Common myeloid progenitor, CD34-positive (primary cell): ENCODE measurements at regions of chr22 and their contacts with region 1.

Region 1: GRCh38 chr22:40024201-40025061 is 29.7 kb downstream of the FAM83F start:
- DNase-seq: peak; percentile 35 to 48 (median 42)
- H3K4me3 ChIP-seq: no peak overlapping the region
- H3K27ac ChIP-seq: no peak overlapping the region
- H3K4me1 ChIP-seq: peaks cover 0 to 4% (median 4%) of the 10 kb centered on the region in 4 experiments
- H3K27me3 ChIP-seq: peaks cover 0 to 14% (median 4%) of the 10 kb centered on the region in 5 experiments

Region 2: DNA sequence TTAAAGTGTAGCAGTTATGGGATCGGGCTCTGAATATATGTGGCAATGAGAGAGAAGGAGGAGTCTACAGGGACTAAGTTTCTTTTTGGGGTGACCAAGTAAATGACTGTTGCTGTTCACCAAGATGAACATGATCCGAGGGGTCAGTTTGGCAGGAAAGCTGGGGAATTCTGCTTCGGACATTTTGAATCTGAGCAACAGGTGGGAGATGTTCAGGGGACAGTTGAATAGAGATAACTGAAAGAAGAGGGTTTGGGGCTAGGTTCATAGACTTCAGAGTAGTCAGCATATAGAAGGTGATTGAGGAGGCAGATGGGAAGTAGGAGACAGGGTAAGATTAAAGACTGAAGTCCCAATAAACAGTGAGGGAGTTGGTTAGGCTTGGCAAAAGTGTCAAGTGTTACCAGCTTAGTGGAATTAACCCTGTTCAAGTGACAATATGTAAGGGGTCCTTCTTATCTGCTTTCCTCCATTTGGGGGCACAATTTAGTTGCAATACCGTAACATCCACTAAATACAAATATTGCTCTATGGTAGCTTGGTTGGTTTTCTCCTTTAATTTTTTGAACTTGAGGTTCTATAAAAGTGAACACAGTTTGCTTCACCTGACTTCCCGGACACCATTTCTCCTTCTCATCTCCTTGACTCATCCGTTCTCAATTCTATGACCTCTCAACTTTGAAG is 128.0 kb before region 1 on chr22:
- CTCF ChIA-PET with region 1: interaction called, 10 read pairs
- POLR2A ChIA-PET with region 1: no interaction called
- DNase-seq: no peak
- H3K4me3 ChIP-seq: no peak overlapping the region
- H3K27ac ChIP-seq: no peak overlapping the region
- H3K4me1 ChIP-seq: peaks cover 13 to 40% (median 20%) of the 10 kb centered on the region in 4 experiments
- H3K27me3 ChIP-seq: no peaks in the 10 kb centered on the region

Region 3: DNA sequence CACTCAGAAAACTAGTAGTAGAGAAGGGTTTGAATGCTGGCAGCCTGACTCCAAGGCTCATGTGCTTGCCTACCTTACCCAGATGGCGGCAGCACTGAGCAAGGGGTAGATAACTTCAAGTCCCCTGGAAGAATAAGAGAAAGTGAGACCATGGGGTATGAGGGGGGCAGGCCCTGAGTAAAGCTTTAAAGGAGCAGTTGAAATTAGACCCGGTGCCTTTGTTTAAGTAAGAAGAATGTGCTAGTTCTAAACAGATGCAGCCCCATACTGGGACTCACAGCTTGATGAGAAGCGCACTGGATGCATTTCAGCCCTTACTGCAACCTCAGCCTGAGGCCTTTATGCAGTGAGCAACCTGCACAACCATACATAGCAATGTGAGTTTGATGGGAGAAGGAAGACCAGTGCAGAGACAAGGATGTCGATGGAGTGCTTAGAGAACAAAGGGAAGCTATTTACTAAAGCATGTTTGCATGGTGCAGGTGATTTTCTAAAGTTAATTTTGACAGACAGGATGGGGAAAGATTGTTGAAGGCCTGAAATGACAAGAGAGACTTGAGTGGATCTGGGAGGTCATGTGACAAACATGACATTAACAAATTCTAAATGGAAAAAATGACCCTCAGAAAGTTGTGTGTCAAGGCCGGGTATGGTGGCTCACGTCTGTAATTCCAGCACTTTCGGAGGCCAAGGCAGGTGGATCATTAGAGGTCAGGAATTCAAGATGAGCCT is 91.3 kb before region 1 on chr22:
- CTCF ChIA-PET with region 1: interaction called, 14 read pairs
- POLR2A ChIA-PET with region 1: no interaction called
- DNase-seq: peak; percentile 54 to 77 (median 73)
- H3K4me3 ChIP-seq: no peak overlapping the region
- H3K27ac ChIP-seq: no peak overlapping the region
- H3K4me1 ChIP-seq: peaks cover 0 to 22% (median 4%) of the 10 kb centered on the region in 4 experiments
- H3K27me3 ChIP-seq: peaks cover 0 to 39% (median 14%) of the 10 kb centered on the region in 5 experiments

Region 4: DNA sequence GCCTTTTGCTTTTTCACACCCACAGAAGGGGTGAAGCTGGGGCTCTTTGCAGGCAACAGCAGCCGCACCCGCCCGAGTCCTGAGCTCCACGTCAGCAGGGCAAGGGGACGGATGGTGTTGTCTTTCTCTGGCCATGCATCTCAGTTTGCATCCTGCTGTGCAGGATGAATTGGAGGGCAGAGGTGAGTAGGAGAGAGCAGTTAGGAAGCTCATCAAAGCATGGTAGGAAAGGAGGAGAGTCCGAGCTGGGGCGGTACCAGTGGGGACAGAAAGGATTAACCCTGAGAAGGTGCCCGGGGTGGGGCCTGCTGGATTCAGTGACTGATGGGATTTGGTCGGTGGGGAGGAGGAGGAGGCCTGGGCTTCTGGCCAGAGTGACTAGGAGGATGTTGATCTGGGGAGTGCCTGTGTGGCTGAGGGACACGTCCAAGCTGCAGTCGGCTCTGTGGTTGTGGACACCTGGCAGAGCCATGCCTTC is 15.1 kb before region 1 on chr22:
- CTCF ChIA-PET with region 1: interaction called, 19 read pairs
- POLR2A ChIA-PET with region 1: interaction called, 4 read pairs
- DNase-seq: no peak
- H3K4me3 ChIP-seq: no peak overlapping the region
- H3K27ac ChIP-seq: no peak overlapping the region
- H3K4me1 ChIP-seq: no peaks in the 10 kb centered on the region
- H3K27me3 ChIP-seq: peaks cover 0 to 67% (median 25%) of the 10 kb centered on the region in 5 experiments

Region 5: GRCh38 chr22:40036591-40037225 is 12.3 kb after region 1 on chr22:
- CTCF ChIA-PET with region 1: interaction called, 36 read pairs
- POLR2A ChIA-PET with region 1: no interaction called
- DNase-seq: peak; percentile 79 to 84 (median 80)
- H3K4me3 ChIP-seq: no peak overlapping the region
- H3K27ac ChIP-seq: no peak overlapping the region
- H3K4me1 ChIP-seq: peaks cover 6 to 40% (median 24%) of the 10 kb centered on the region in 4 experiments
- H3K27me3 ChIP-seq: no peaks in the 10 kb centered on the region

Region 6: DNA sequence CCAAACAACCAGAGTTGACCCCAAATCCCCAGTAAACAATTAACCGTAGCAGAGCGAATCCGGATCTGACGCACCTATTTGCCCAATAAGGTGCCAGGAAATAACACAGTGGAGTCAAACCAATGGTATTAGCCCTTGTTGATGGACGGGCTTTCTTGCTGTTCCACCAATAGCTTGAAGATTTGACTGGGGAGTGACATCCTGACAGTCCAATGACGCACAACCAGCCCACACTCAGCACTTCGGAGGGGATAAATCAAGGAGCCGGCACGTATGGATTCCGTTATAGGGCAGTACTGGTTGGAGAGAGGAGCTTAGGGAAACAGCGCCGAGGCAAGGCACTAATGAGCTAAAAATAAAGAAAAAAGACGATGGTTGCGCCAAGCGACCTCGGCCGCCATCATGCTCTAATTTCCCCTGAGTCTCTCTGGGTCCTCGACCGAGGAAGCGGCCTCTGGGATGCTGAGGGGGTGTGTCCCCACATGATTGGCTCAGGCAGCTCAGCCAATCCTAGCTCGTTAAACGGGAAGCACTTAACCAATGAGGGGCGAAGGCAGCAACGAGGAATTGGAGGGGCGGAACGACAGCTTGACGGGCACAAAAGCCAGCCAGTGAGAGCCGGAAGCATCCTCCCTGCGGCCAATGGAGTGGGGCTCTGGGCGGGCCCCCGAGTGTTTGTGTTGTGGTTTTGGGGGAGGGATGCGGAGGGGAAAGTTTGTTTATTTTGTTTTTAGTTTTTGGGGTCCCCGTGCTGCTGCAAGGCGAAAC is 19.9 kb after region 1 on chr22:
- CTCF ChIA-PET with region 1: interaction called, 24 read pairs
- POLR2A ChIA-PET with region 1: no interaction called
- DNase-seq: peak; percentile 100
- H3K4me3 ChIP-seq: peak overlapping the region; percentile 75 to 98 (median 85)
- H3K27ac ChIP-seq: peak overlapping the region; percentile 96 to 97
- H3K4me1 ChIP-seq: peaks cover 14 to 48% (median 39%) of the 10 kb centered on the region in 4 experiments
- H3K27me3 ChIP-seq: no peaks in the 10 kb centered on the region

Region 7: DNA sequence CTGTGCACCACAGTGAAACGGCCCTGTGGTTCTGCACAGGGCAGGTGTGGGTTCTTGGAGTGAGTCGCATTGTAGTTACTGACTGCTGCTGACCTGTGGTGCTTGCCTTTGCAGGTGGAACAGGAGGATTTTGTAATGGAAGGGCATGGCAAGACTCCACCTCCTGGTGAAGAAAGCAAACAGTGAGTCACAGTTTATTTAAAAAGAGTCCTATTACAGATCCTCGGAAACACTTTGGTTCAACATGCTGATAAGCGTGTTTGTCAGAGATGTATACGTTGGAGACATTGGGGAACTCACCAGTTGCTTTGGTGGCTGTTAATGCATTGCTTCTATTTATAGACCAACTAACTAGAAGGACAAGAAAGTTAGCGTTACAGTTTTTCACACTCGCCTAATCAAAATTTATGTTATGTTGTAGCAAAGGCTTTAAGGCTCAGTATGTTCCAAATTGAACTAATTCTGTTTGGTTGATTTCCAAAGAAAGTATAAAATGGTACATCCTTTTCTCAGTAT is 131.6 kb after region 1 on chr22:
- CTCF ChIA-PET with region 1: no interaction called
- POLR2A ChIA-PET with region 1: no interaction called
- DNase-seq: peak in 2 of 3 donors; percentile 26 to 45
- H3K4me3 ChIP-seq: no peak overlapping the region
- H3K27ac ChIP-seq: no peak overlapping the region
- H3K4me1 ChIP-seq: no peaks in the 10 kb centered on the region
- H3K27me3 ChIP-seq: no peaks in the 10 kb centered on the region